ENCODE measurements at regions of chr15 and their contacts with region 1.

Region 1: DNA sequence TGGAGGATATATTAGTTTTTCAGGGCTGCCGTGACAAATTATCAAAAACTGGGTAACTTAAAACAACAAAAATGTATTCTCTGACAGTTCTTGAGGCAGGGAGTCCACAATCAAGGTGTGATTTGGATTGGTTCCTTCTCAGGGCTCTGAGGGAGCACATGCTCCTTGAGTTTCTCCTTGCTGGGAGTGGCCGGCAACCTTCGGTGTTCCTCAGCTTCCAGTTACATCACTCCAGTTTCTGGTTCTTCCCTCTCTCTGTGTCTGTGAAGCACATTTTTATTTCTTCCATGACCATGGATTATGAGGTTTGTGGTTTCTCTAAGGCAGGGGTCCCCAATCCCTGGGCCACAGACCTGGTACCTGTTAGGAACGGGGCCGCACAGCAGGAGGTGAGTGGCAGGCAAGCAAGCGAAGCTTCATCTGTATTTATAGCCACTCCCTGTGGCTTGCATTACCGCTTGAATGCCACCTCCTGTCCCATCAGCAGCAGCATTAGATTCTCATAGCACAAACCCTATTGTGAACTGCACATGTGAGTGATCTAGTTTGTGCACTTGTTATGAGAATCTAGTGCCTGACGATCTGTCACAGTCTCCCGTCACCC is 24.3 kb downstream of the LRRC28 start:
- DNase-seq: no peak
- H3K4me3 Mint-ChIP-seq: no peak overlapping the region
- H3K27ac Mint-ChIP-seq: no peak overlapping the region
- H3K4me1 Mint-ChIP-seq: peaks cover 22% of the 10 kb centered on the region
- H3K27me3 Mint-ChIP-seq: no peaks in the 10 kb centered on the region

Region 2: DNA sequence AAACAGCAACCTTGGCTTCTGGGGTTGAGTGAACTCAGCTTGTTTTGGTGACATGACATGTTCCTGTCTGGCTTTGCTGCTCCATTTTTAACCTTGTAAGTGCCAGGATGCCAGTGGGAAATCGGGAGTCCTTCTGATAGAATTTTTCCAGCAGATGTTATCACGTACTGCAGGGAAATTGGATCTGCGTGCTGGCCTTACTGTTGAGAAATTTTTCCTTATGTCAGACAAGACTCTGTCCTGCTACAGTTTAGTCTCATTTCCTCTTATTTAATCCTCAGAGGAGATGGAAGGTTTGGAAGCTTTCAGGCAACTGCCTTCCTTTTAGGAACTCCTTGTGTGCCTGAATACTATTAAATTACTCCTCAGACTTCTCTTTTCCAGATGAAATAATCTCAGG is 348.6 kb before region 1 on chr15:
- CTCF ChIA-PET with region 1: no interaction called
- POLR2A ChIA-PET with region 1: no interaction called
- DNase-seq: no peak
- H3K4me3 Mint-ChIP-seq: no peak overlapping the region
- H3K27ac Mint-ChIP-seq: no peak overlapping the region
- H3K4me1 Mint-ChIP-seq: no peaks in the 10 kb centered on the region
- H3K27me3 Mint-ChIP-seq: no peaks in the 10 kb centered on the region

Region 3: GRCh38 chr15:99250494-99251435 is 24.9 kb before region 1 on chr15:
- CTCF ChIA-PET with region 1: interaction called, 15 read pairs
- POLR2A ChIA-PET with region 1: interaction called, 5 read pairs
- DNase-seq: peak; percentile 98
- H3K4me3 Mint-ChIP-seq: peak overlapping the region; percentile 85
- H3K27ac Mint-ChIP-seq: peak overlapping the region; percentile 74
- H3K4me1 Mint-ChIP-seq: peaks cover 28% of the 10 kb centered on the region
- H3K27me3 Mint-ChIP-seq: no peaks in the 10 kb centered on the region

Region 4: GRCh38 chr15:99264125-99264524 is 11.5 kb before region 1 on chr15:
- CTCF ChIA-PET with region 1: interaction called, 20 read pairs
- POLR2A ChIA-PET with region 1: no interaction called
- DNase-seq: no peak
- H3K4me3 Mint-ChIP-seq: no peak overlapping the region
- H3K27ac Mint-ChIP-seq: no peak overlapping the region
- H3K4me1 Mint-ChIP-seq: peaks cover 9% of the 10 kb centered on the region
- H3K27me3 Mint-ChIP-seq: no peaks in the 10 kb centered on the region

Region 5: GRCh38 chr15:99371180-99372103 is 95.8 kb after region 1 on chr15:
- CTCF ChIA-PET with region 1: interaction called, 10 read pairs
- POLR2A ChIA-PET with region 1: no interaction called
- DNase-seq: no peak
- H3K4me3 Mint-ChIP-seq: no peak overlapping the region
- H3K27ac Mint-ChIP-seq: no peak overlapping the region
- H3K4me1 Mint-ChIP-seq: peaks cover 20% of the 10 kb centered on the region
- H3K27me3 Mint-ChIP-seq: no peaks in the 10 kb centered on the region

Measured in activated CD4-positive, alpha-beta memory T cell treated with anti-CD3 and anti-CD28 coated beads, Interleukin-2, amount 10 ng/mL, durations not matched to agents 7 days and 5 days (primary cell).